Calu3 (cell line): ENCODE measurements at regions of chrX and their contacts with region 1.

Region 1: DNA sequence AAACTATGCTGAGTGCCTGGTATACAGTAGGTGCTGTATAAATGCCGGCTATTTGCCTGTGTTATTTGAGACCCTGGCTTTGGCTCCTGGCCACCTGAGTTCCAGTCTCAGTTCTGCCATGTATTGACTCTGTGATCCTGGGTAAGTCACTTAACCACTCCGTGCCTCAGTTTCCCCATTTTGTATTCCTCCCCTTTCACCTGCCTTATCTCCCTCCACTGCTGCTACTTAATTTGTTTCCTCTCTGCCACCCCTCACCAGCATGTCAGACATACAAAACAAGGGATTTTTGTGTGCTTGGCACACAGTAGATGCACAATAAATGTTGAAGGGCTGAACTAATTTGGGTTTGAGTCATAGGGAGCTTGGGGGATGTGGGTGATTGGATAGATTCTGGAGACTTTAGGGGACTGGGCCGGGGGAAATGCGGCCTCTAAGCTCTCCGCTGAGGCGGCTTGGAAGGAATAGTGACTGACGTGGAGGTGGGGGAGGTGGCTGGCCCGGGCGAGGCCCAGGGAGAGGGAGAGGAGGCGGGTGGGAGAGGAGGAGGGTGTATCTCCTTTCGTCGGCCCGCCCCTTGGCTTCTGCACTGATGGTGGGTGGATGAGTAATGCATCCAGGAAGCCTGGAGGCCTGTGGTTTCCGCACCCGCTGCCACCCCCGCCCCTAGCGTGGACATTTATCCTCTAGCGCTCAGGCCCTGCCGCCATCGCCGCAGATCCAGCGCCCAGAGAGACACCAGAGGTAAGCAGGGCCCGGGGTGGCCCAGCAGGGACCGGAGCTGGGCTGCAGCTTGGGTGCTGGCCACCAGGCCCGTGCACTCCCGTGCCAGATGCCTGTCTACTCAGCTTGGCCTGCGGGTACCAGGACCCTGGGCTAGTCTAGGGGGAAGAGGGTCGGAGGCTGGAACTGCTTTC is at the start of gene TIMP1:
- DNase-seq: peak; percentile 87
- H3K4me3 Mint-ChIP-seq: peak within 1 kb of the TSS; percentile 70
- H3K27ac Mint-ChIP-seq: peak within 1 kb of the TSS; percentile 85
- H3K4me1 Mint-ChIP-seq: peaks cover 51% of the 10 kb centered on the region
- H3K27me3 Mint-ChIP-seq: no peaks in the 10 kb centered on the region
- CTCF ChIP-seq: no peak
- total RNA-seq, gene TIMP1: 143 and 188 TPM in 2 replicates

Region 2: DNA sequence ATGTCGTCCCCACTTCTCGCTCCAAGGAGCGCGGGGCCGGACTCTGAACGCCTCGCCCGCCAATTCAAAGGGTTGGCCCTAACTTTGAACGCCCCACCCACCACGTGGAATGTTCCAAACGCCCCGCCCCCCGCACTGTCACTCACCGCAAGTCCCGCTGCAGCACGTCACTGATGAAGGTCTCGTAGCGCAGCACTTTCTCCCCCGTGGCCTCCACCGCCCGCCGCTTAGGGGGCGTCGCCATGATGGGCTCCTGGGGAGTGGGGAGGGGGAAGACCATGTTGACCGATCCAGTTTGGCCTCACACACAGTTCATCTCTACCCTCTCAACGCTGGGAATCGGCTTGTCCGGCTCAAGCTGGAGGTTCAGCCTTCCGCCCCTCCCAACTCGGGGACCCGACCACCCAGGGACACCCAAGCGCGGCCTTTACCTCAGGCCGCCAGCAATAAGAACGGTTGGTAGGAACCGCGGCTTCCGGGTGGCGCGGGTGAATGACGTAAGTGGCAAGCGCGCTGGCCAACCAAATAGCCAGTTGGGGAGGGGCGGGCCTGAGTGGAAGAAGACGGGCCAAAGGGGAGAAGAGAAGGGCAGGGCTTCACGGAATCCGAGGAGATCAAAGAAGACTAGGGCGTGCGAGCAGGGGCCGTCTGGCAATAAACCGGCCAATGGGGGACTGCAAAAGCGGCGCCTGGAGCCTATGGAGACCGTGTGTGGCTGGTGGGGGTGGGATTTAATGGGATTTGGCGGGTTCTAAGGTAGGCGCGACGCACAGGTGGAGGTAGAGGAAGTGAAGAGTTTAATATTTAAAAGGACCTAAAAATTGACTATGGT is 76.9 kb after region 1 on chrX and contains the start of gene UXT:
- CTCF ChIA-PET with region 1: no interaction called
- intact Hi-C with region 1: loop called (anchors 2 kb)
- DNase-seq: peak; percentile 95
- H3K4me3 Mint-ChIP-seq: peak within 1 kb of the TSS; percentile 74
- H3K27ac Mint-ChIP-seq: peak within 1 kb of the TSS; percentile 96
- H3K4me1 Mint-ChIP-seq: no peaks in the 10 kb centered on the region
- H3K27me3 Mint-ChIP-seq: no peaks in the 10 kb centered on the region
- CTCF ChIP-seq: no peak
- total RNA-seq, gene UXT: 112 and 116 TPM in 2 replicates